ENCODE measurements at regions of chr3 and their contacts with region 1.

Region 1: GRCh38 chr3:71896751-71897150 is 111.8 kb upstream of the PROK2 start:
- DNase-seq: no peak
- H3K4me3 ChIP-seq: no peak overlapping the region
- H3K27ac ChIP-seq: no peak overlapping the region
- H3K4me1 ChIP-seq: no peaks in the 10 kb centered on the region
- H3K27me3 ChIP-seq: peaks cover 0 to 25% (median 2%) of the 10 kb centered on the region in 5 experiments

Region 2: GRCh38 chr3:71885006-71885405 is 11.7 kb before region 1 on chr3:
- CTCF ChIA-PET with region 1: interaction called, 12 read pairs
- POLR2A ChIA-PET with region 1: no interaction called
- DNase-seq: no peak
- H3K4me3 ChIP-seq: no peak overlapping the region
- H3K27ac ChIP-seq: no peak overlapping the region
- H3K4me1 ChIP-seq: no peaks in the 10 kb centered on the region
- H3K27me3 ChIP-seq: peaks cover 0 to 3% (median 0%) of the 10 kb centered on the region in 5 experiments

Measured in common myeloid progenitor, CD34-positive (primary cell).